ENCODE measurements at regions of chr9 and their contacts with region 1.

Region 1: GRCh38 chr9:13213337-13213736 is 66.2 kb downstream of the MPDZ start:
- DNase-seq: no peak
- H3K4me3 ChIP-seq: no peak overlapping the region
- H3K27ac ChIP-seq: no peak overlapping the region
- H3K4me1 ChIP-seq: no peaks in the 10 kb centered on the region
- H3K27me3 ChIP-seq: no peaks in the 10 kb centered on the region
- CTCF ChIP-seq: peak; percentile 36 to 51

Region 2: GRCh38 chr9:13279284-13280141 is 66.2 kb after region 1 on chr9 and contains the start of gene MPDZ:
- intact Hi-C with region 1: loop called (anchors 10 kb)
- DNase-seq: peak; percentile 38 to 80
- H3K4me3 ChIP-seq: peak within 1 kb of the TSS; percentile 78 to 89
- H3K27ac ChIP-seq: peak within 1 kb of the TSS; percentile 95 to 98
- H3K4me1 ChIP-seq: peaks cover 0 to 36% (median 20%) of the 10 kb centered on the region in 4 donors
- H3K27me3 ChIP-seq: no peaks in the 10 kb centered on the region
- CTCF ChIP-seq: peak in 1 of 2 experiments; percentile 26